Stomach (tissue), 19 donors: ENCODE measurements at regions of chr1 and their contacts with region 1.

Region 1: DNA sequence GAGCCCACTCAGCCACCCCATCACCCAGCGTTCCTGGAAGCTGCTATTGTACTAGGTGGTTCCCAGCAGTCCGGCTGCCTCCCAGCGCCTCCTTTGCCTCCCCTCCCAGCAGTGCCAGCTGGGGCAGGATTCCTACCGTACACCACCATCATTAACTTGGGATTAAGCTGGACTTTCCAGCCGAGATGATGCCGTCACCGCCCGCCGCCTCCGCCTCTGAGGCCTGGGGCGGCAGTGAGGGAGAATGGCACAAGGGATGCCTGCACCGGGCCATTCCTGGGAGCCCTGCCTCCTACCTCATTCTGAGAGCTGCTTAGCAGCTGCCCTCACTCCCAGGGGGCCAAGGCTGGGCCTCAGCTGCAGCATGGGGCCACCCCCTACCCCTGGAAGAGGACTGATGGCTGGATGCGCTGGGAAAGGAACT is 13.2 kb downstream of the CNTN2 start:
- DNase-seq: no peak
- H3K4me3 ChIP-seq: no peak overlapping the region
- H3K27ac ChIP-seq: no peak overlapping the region
- H3K4me1 ChIP-seq: no peaks in the 10 kb centered on the region
- H3K27me3 ChIP-seq: peaks cover 0 to 36% (median 0%) of the 10 kb centered on the region in 3 donors
- CTCF ChIP-seq: no peak
- EP300 ChIP-seq: no peak
- POLR2A ChIP-seq: no peak

Region 2: GRCh38 chr1:204961765-204962419 is 94.3 kb before region 1 on chr1:
- intact Hi-C with region 1: no loop called
- DNase-seq: peak in 1 of 2 donors; percentile 52
- H3K4me3 ChIP-seq: no peak overlapping the region
- H3K27ac ChIP-seq: no peak overlapping the region
- H3K4me1 ChIP-seq: no peaks in the 10 kb centered on the region
- H3K27me3 ChIP-seq: peaks cover 0 to 3% (median 0%) of the 10 kb centered on the region in 3 donors
- CTCF ChIP-seq: no peak
- EP300 ChIP-seq: no peak
- POLR2A ChIP-seq: no peak

Region 3: DNA sequence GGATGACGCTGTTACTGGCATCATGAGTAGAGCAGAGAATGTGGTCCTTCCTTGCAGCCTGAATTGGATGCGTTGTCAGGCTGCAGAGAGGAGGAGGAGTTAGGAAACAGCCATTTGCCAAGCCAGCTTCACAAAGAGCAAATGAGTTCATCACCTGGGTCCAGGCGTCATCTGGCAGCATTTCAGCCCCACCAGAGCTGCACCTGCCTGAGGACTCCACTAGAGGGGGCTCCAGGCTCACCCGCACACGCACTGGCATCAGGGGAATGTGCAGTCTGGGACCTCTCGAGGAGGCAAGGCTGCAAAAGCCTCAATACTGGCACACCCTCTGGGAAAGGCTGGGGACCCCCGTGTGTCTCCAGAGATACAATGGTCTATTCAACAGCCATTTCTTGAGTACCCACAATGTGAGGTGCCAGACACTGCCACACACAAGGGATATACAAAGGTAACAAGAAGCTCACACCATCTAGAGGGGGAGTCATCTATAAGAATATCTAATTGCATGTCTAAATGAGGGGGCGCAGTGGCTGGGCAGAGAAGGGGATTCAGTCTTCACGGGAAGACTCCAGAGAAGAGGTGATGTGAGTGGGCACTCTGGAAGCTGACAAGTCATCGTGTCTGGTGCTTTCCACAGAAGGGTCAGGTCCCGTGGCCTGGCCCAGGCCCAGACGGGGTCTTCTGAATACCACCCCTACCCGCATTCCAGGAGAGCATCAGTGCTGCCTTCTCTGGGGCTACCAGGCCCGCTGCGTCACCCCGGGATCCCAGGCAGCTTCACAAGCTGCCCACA is 66.7 kb before region 1 on chr1:
- intact Hi-C with region 1: loop called (anchors 5 kb)
- DNase-seq: peak; percentile 67 to 91
- H3K4me3 ChIP-seq: no peak overlapping the region
- H3K27ac ChIP-seq: peak overlapping the region in 1 of 5 donors; percentile 4
- H3K4me1 ChIP-seq: no peaks in the 10 kb centered on the region
- H3K27me3 ChIP-seq: peaks cover 0 to 4% (median 3%) of the 10 kb centered on the region in 3 donors
- CTCF ChIP-seq: peak in 6 of 7 experiments; percentile 22 to 87 (median 76)
- EP300 ChIP-seq: no peak
- POLR2A ChIP-seq: no peak